ENCODE measurements at regions of chr5 and their contacts with region 1.

Region 1: GRCh38 chr5:150656191-150657132 is 4.6 kb upstream of the MYOZ3 start:
- DNase-seq: peak; percentile 82 to 92
- ATAC-seq: peak; percentile 55 to 59 (median 56)
- H3K4me3 ChIP-seq: peak overlapping the region; percentile 74
- H3K27ac ChIP-seq: peak overlapping the region; percentile 95
- H3K4me1 ChIP-seq: peaks cover 64% of the 10 kb centered on the region
- H3K27me3 ChIP-seq: no peaks in the 10 kb centered on the region
- CTCF ChIP-seq: peak; percentile 87

Region 2: GRCh38 chr5:150449517-150450339 is 206.7 kb before region 1 on chr5 and contains the start of gene RPS14:
- intact Hi-C with region 1: loop called in 1 of 2 experiments (anchors 10 kb)
- DNase-seq: peak; percentile 93 to 97
- ATAC-seq: peak; percentile 96 to 98 (median 96)
- H3K4me3 ChIP-seq: peak within 1 kb of the TSS; percentile 82
- H3K27ac ChIP-seq: peak within 1 kb of the TSS; percentile 94
- H3K4me1 ChIP-seq: peaks cover 17% of the 10 kb centered on the region
- H3K27me3 ChIP-seq: no peaks in the 10 kb centered on the region
- CTCF ChIP-seq: peak; percentile 88
- total RNA-seq, gene RPS14: 977 to 1,443 (median 1,285) TPM

Region 3: DNA sequence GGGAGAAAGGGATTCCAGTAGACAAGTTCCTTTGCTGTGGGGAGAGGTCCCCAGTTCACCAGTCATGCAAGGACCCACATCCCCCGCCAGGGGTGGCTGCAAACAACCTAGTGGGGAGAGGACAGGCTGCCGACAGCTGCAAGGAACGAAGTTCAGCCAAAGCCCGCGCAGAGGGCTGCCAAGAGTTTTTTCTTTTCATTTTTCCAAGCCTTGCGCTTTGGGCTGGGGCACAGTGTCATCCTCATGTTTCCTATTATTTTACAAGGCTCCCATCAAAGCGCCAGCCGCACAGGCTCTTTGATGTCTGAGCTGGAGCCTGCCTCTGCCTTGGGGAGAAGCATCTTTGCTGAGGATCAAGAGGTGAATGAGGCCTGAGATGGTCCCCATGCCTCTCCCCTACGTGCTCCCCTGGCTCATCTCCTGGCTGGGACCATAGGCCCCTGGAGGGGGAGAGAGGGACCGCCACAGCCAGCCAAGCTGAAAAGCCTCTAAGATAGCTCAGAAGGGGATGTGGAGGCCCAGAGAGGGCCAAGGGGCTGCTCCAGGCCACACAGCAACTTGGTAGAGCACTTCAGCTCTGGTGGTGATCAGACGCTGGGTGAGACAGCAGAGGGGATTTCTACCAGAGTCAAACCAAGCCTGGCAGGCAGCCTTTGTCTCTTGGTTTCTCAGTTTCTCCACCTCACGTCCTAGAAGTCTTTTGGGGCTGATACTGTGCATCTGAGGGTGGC is 66.4 kb before region 1 on chr5:
- intact Hi-C with region 1: loop called (anchors 1 to 5 kb)
- DNase-seq: peak; percentile 80 to 90
- ATAC-seq: peak; percentile 74 to 93 (median 88)
- H3K4me3 ChIP-seq: no peak overlapping the region
- H3K27ac ChIP-seq: peak overlapping the region; percentile 56
- H3K4me1 ChIP-seq: peaks cover 48% of the 10 kb centered on the region
- H3K27me3 ChIP-seq: no peaks in the 10 kb centered on the region
- CTCF ChIP-seq: peak; percentile 77

Measured in psoas muscle (tissue), 8 donors.